ENCODE measurements at regions of chr11 and their contacts with region 1.

Region 1: DNA sequence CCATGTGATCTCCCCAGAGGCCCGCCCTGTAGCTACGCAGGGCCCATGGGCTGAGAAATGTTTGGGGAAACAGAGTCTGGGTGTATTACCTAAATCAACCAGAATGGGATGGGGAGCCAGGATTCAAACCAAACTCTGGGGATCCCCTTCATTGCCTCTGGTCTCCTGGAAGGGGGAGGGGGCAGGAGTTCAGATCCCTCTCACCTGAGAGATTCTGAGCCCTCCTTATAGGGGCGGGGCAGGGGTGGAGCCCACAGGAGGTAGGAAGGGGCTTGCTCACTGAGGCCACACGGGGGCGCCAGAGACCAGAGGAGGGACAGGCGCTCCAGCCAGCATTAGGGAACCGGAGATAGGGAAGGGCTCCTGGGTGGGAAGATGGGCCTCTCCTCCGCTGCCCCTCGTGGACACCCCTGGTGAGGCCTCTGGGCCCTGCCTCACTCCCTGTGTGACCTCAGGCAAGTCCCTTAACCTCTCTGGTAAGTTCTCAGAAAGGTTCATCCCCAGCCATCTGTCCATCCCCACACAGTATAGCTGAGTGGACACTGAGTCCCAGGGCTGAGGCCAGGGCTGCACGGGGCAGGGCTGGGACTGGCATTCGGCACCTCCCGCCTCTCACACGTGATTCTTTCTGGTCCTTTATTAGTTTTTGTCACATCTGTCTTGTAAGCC is 2.7 kb upstream of the CDC42BPG start:
- DNase-seq: peak; percentile 87
- ATAC-seq: peak; percentile 65
- H3K4me3 ChIP-seq: 0 out of 4 replicates have a peak overlapping the region, but pooled peaks of 1 of the 2 experiments have one; percentile 19
- H3K27ac ChIP-seq: peak overlapping the region; percentile 88
- H3K4me1 ChIP-seq: peaks cover 72 to 92% of the 10 kb centered on the region in 2 experiments
- H3K27me3 ChIP-seq: no peaks in the 10 kb centered on the region
- CTCF ChIP-seq: peak in 2 of 3 experiments; percentile 94 to 95; a peak in 4 of 6 replicates
- POLR2A ChIP-seq: no peak
- RAD21 ChIP-seq: no peak

Region 2: GRCh38 chr11:64609436-64610047 is 237.6 kb before region 1 on chr11:
- CTCF ChIA-PET with region 1: no interaction called
- POLR2A ChIA-PET with region 1: no interaction called
- RAD21 ChIA-PET with region 1: no interaction called
- intact Hi-C with region 1: no loop called
- DNase-seq: no peak
- ATAC-seq: peak; percentile 65
- H3K4me3 ChIP-seq: no peak overlapping the region
- H3K27ac ChIP-seq: no peak overlapping the region
- H3K4me1 ChIP-seq: no peaks in the 10 kb centered on the region
- H3K27me3 ChIP-seq: no peaks in the 10 kb centered on the region
- CTCF ChIP-seq: no peak
- POLR2A ChIP-seq: no peak
- RAD21 ChIP-seq: no peak

Region 3: DNA sequence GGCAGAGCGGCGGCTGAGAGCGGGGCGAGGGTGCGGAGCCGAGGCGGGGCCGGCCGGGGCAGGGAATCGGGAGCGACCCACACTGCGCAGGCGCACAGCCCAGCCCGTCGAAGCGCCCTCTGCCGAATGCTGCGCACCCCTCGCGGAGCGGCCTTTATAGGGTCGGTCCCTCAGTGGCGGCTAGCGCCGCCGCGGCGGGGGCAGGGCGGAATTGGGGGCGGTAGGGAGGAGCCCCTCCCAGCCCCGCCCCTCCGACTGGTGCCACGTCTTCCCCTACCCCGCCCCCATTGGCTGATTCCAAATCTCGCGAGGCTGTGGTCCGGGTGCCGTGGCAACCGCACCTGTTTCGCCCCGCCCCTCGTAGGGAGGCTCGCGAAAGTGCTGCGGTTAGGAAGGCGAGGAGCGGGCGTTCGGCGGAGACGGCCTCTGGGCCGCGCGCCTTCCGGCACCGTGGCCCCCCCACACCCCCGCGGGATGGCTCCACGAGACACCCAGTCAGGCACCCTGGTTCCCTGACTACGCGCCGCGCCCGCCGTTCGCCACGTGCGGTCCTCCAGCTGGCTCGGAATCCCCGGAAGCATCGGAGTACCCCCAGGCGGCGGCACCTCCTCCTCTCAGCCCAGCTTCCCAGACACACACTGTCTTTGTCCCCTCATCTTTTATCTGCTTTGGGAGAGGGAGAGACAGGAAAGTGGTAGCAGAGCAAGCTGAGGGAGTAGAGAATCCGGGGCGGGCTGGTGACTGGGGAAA is 31.5 kb after region 1 on chr11 and contains the start of gene EHD1:
- CTCF ChIA-PET with region 1: interaction called, 4 read pairs
- POLR2A ChIA-PET with region 1: interaction called, 56 read pairs
- RAD21 ChIA-PET with region 1: interaction called in 1 of 2 experiments, 3 read pairs
- intact Hi-C with region 1: loop called (anchors 1 kb)
- DNase-seq: peak; percentile 92
- ATAC-seq: peak; percentile 88
- H3K4me3 ChIP-seq: peak within 1 kb of the TSS; percentile 95 to 99
- H3K27ac ChIP-seq: peak within 1 kb of the TSS; percentile 84
- H3K4me1 ChIP-seq: peaks cover 22 to 33% of the 10 kb centered on the region in 2 experiments
- H3K27me3 ChIP-seq: no peaks in the 10 kb centered on the region
- CTCF ChIP-seq: peak; percentile 34 to 52 (median 36); a peak in 5 of 6 replicates
- POLR2A ChIP-seq: peak; percentile 89
- RAD21 ChIP-seq: no peak; the same call in none of the 2 replicates
- total RNA-seq, gene EHD1: 48.1 TPM

Region 4: DNA sequence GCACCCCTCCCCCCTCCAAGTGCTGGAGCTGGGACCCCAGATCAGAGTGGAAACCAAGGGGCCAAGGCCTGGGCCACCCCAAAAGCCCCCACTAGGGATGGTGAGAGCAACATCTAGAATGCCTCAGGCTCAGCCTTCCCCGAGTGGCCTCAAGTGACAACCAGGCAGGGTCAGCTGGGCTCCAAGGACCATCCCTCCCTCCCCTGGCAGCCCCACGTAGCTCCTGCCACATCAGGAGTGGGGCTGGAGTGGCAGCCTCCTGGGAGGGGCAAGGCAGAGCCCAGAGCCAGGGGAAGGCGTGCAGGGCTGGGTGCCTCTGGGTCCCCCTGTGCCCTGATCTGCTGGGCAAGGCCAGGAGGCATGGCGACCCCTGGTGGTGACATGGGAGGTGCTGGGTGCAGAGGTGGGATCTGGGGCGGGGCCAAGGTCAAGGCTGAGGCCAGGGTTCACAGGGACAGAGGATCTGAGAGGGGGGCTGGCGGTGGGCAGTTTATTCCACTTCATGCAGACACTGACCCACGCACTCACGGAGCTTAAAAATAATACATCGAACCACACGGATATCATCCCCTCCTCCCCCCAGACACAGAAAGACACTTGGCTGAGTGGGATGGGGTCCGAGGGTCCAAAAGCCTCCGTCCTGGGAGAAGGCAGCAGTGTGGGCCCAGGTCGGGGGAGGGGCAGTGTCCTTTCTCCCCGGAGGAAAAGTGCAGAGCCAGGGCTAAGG is 47.1 kb after region 1 on chr11:
- CTCF ChIA-PET with region 1: interaction called, 112 read pairs
- POLR2A ChIA-PET with region 1: interaction called, 3 read pairs
- RAD21 ChIA-PET with region 1: interaction called in 1 of 2 experiments, 4 read pairs
- intact Hi-C with region 1: loop called (anchors 1 kb)
- DNase-seq: no peak
- ATAC-seq: peak; percentile 94
- H3K4me3 ChIP-seq: no peak overlapping the region
- H3K27ac ChIP-seq: no peak overlapping the region; the same call in 1 of the 2 replicates
- H3K4me1 ChIP-seq: peaks cover 0 to 16% of the 10 kb centered on the region in 2 experiments; a peak in 2 of 4 replicates
- H3K27me3 ChIP-seq: no peaks in the 10 kb centered on the region
- CTCF ChIP-seq: peak; percentile 92 to 96 (median 93)
- POLR2A ChIP-seq: no peak
- RAD21 ChIP-seq: peak; percentile 91

Region 5: DNA sequence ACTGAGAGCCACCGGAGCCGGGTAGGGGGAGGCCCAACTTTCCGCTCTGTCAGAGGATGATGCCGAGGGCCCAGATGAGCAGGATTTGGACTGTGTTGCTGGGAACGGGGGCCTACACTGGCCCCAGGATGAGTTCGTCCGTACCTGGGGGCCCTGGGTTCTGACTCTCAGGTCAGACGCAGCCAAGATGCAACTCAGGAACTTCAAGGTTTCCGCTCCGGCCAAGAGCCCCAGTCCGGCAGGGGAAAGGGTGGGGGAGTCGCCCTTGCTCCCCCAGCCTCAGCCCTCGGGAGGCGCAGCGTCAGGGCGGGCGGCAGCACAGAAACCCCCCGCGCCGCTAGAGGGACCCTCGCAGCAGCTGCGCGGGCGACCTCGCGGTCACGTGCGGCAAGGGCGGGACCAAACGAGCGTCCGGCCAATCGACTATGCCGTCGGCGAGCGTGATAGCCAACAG is 166.6 kb after region 1 on chr11:
- CTCF ChIA-PET with region 1: interaction called, 10 read pairs
- POLR2A ChIA-PET with region 1: interaction called, 3 read pairs
- RAD21 ChIA-PET with region 1: no interaction called
- intact Hi-C with region 1: loop called (anchors 1 kb)
- DNase-seq: peak; percentile 80
- ATAC-seq: peak; percentile 84
- H3K4me3 ChIP-seq: peak overlapping the region; percentile 71 to 75
- H3K27ac ChIP-seq: peak overlapping the region; percentile 87
- H3K4me1 ChIP-seq: peaks cover 15 to 34% of the 10 kb centered on the region in 2 experiments
- H3K27me3 ChIP-seq: no peaks in the 10 kb centered on the region
- CTCF ChIP-seq: peak in 1 of 3 experiments; percentile 87; a peak in 1 of 6 replicates
- POLR2A ChIP-seq: no peak
- RAD21 ChIP-seq: no peak

Region 6: GRCh38 chr11:65111744-65112414 is 264.7 kb after region 1 on chr11 and contains the start of gene TM7SF2:
- CTCF ChIA-PET with region 1: interaction called, 10 read pairs
- POLR2A ChIA-PET with region 1: no interaction called
- RAD21 ChIA-PET with region 1: no interaction called
- intact Hi-C with region 1: loop called (anchors 2 kb)
- DNase-seq: peak; percentile 89
- ATAC-seq: peak; percentile 81
- H3K4me3 ChIP-seq: peak within 1 kb of the TSS; percentile 66 to 76
- H3K27ac ChIP-seq: peak within 1 kb of the TSS; percentile 82
- H3K4me1 ChIP-seq: peaks cover 22 to 50% of the 10 kb centered on the region in 2 experiments
- H3K27me3 ChIP-seq: no peaks in the 10 kb centered on the region
- CTCF ChIP-seq: no peak
- POLR2A ChIP-seq: peak; percentile 99
- RAD21 ChIP-seq: no peak
- total RNA-seq, gene TM7SF2: 52.9 TPM

Region 7: GRCh38 chr11:65251476-65251875 is 404.3 kb after region 1 on chr11:
- CTCF ChIA-PET with region 1: no interaction called
- POLR2A ChIA-PET with region 1: no interaction called
- RAD21 ChIA-PET with region 1: no interaction called
- intact Hi-C with region 1: loop called (anchors 10 kb)
- DNase-seq: no peak
- ATAC-seq: no peak
- H3K4me3 ChIP-seq: no peak overlapping the region
- H3K27ac ChIP-seq: no peak overlapping the region
- H3K4me1 ChIP-seq: peaks cover 3 to 6% of the 10 kb centered on the region in 2 experiments; a peak in 1 of 4 replicates
- H3K27me3 ChIP-seq: no peaks in the 10 kb centered on the region
- CTCF ChIP-seq: 0 out of 6 replicates have a peak, but pooled peaks of 1 of the 3 experiments have one; percentile 1
- POLR2A ChIP-seq: no peak
- RAD21 ChIP-seq: no peak

Measured in HCT116 (cell line).